ENCODE measurements at regions of chr6 and their contacts with region 1.

Region 1: GRCh38 chr6:156564127-156564806 is 212.9 kb upstream of the ARID1B start:
- DNase-seq: peak; percentile 86
- H3K4me3 ChIP-seq: no peak overlapping the region
- H3K27ac ChIP-seq: no peak overlapping the region
- H3K4me1 ChIP-seq: peaks cover 0 to 10% (median 0%) of the 10 kb centered on the region in 4 donors
- H3K27me3 ChIP-seq: no peaks in the 10 kb centered on the region
- CTCF ChIP-seq: peak; percentile 92 to 96 (median 93)
- EP300 ChIP-seq: no peak
- POLR2A ChIP-seq: no peak

Region 2: DNA sequence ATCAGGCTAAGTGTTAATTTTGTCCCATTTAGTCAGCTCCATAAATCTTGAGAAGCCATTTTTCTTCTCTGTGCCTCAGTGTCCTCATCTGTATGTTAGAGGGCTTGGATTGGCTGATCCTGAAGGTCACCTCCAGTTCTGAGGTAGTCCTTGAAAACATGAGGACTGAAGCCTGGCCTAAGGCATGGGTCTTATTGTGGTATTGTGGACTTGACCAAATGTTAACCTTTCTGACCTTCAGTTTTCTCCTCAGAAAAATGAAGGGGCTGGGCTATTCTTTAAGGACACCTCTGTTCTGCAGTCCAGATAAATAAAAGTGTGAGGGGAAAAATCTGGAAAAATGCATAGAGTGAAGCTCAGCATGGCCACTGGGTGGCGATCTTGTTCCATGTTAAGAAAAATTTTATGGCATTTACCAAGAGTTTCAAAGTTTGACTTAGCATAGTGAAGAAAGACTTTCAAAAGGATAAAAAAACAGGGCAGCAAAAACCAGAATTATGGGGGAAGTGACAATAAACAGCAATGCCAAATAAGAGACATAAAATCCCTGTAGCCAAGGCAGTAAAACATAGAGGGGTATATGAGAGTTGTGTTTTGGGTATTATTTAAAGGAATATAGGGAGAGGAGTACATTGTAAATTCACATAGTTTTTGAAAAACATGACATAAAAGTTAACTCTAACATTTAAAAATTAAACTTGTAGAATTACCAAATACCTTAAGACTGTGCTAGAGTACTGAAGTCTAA is 1236.8 kb before region 1 on chr6:
- in situ Hi-C with region 1: loop called in 1 of 4 experiments (anchors 25 kb)
- intact Hi-C with region 1: no loop called
- DNase-seq: peak; percentile 60
- H3K4me3 ChIP-seq: no peak overlapping the region
- H3K27ac ChIP-seq: no peak overlapping the region
- H3K4me1 ChIP-seq: peaks cover 0 to 3% (median 0%) of the 10 kb centered on the region in 4 donors
- H3K27me3 ChIP-seq: no peaks in the 10 kb centered on the region
- CTCF ChIP-seq: peak; percentile 76 to 88 (median 81)
- EP300 ChIP-seq: no peak
- POLR2A ChIP-seq: no peak

Region 3: DNA sequence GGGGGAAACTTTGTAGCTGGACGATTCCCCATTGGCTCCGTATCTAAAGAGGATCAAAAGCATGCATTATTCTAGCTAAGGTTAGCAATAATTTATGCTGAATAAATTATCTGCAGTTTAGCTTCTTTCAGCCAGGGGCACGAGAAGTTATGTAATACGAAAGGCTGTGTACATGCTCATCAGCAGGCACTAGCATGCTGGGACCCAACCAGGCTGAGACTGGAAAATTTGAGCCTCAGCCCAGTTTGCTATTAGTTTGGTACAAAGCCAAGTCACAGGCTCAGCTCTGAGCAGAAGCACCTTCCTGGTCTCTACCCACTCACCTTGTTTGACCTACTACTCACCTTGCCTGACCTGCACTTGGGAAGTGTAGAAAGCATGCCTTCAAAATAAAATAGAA is 115.1 kb before region 1 on chr6:
- in situ Hi-C with region 1: no loop called
- intact Hi-C with region 1: no loop called
- DNase-seq: no peak
- H3K4me3 ChIP-seq: no peak overlapping the region
- H3K27ac ChIP-seq: no peak overlapping the region
- H3K4me1 ChIP-seq: peaks cover 0 to 5% (median 0%) of the 10 kb centered on the region in 4 donors
- H3K27me3 ChIP-seq: no peaks in the 10 kb centered on the region
- CTCF ChIP-seq: no peak
- EP300 ChIP-seq: no peak
- POLR2A ChIP-seq: no peak

Region 4: GRCh38 chr6:156699017-156699421 is 134.8 kb after region 1 on chr6:
- in situ Hi-C with region 1: no loop called
- intact Hi-C with region 1: loop called (anchors 10 kb)
- DNase-seq: no peak
- H3K4me3 ChIP-seq: no peak overlapping the region
- H3K27ac ChIP-seq: no peak overlapping the region
- H3K4me1 ChIP-seq: peaks cover 0 to 6% (median 2%) of the 10 kb centered on the region in 4 donors
- H3K27me3 ChIP-seq: no peaks in the 10 kb centered on the region
- CTCF ChIP-seq: no peak
- EP300 ChIP-seq: no peak
- POLR2A ChIP-seq: no peak

Region 5: GRCh38 chr6:156752666-156753301 is 188.5 kb after region 1 on chr6:
- in situ Hi-C with region 1: loop called in 2 of 4 experiments (anchors 25 kb)
- intact Hi-C with region 1: no loop called
- DNase-seq: peak; percentile 37
- H3K4me3 ChIP-seq: no peak overlapping the region
- H3K27ac ChIP-seq: no peak overlapping the region
- H3K4me1 ChIP-seq: peaks cover 0 to 7% (median 0%) of the 10 kb centered on the region in 4 donors
- H3K27me3 ChIP-seq: no peaks in the 10 kb centered on the region
- CTCF ChIP-seq: peak; percentile 18 to 53 (median 27)
- EP300 ChIP-seq: no peak
- POLR2A ChIP-seq: no peak

Region 6: DNA sequence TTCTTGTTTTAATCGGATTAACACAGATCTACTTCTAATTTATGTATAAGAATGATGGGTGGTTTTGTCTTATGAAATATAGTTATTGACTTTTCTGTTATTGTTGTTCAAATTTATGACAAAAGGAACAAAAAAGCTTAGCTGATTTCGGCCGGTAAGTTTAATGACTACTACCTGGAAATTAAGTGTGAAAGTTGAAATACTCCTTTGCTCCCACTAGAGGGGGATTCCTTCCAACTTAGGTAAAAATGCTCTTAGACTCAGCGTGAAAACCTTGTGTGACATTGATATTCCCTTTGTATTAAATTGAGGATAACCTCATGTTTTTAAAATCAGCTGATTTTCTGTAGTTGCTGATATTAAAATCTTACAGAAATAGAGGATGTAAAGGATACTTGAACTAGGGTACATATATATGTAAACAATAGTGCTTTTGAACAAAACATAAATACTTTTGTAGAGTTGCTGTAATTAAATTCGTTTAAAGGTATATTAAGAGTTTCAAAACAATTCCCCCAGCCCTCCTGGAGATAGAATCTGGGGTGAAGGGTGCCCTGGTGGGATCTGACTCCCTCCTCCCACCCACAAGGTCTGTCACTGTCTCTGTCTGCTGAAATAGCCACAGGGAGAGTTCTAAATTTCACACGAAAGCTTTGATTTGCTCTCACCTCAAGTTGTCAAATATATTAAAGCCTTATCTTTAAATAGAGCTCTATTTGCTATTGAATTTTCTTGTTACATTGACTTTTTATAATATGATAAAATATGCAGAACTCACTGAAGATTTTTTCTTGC is 470.4 kb after region 1 on chr6:
- in situ Hi-C with region 1: loop called in 1 of 4 experiments (anchors 25 kb)
- intact Hi-C with region 1: no loop called
- DNase-seq: no peak
- H3K4me3 ChIP-seq: no peak overlapping the region
- H3K27ac ChIP-seq: peak overlapping the region in 3 of 4 donors; percentile 65 to 80 (median 74)
- H3K4me1 ChIP-seq: peaks cover 4 to 42% (median 15%) of the 10 kb centered on the region in 4 donors
- H3K27me3 ChIP-seq: no peaks in the 10 kb centered on the region
- CTCF ChIP-seq: peak; percentile 60 to 79 (median 65)
- EP300 ChIP-seq: no peak
- POLR2A ChIP-seq: no peak

Region 7: DNA sequence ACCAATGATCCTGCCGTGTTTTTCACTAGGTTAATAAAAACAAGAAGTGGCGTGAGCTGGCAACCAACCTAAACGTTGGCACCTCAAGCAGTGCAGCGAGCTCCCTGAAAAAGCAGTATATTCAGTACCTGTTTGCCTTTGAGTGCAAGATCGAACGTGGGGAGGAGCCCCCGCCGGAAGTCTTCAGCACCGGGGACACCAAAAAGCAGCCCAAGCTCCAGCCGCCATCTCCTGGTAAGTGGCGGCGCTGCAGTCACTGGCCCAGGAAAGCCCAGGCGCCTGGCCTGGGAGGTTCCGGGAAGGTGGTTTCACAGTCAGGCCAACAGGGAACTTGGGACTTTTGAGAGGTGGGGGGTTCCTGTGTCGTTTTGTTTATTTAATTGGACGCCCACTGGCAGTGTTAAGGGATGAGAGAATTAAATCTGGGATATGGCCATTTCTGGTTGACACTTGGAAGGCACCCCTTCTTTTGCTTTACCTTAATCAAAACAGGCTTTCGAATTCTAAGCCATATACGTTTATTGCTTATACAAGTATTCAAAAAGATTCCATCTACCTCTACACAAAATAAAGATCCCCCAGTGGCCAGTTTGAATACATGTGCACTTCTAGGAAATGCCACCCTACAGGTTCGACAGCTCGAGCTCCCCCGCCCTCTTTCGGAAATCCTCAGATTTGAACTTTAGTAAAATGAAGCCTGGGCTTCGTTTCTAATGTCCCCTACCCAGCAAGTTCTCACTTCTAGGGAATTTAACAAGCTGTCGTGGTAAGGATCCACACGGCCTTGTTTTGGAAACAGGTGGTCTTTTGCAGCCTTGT is 620.1 kb after region 1 on chr6:
- in situ Hi-C with region 1: loop called in 3 of 4 experiments (anchors 10 to 25 kb)
- intact Hi-C with region 1: no loop called
- DNase-seq: peak; percentile 81
- H3K4me3 ChIP-seq: peak overlapping the region in 1 of 4 donors; percentile 26
- H3K27ac ChIP-seq: peak overlapping the region in 3 of 4 donors; percentile 7 to 36 (median 30)
- H3K4me1 ChIP-seq: peaks cover 8 to 38% (median 22%) of the 10 kb centered on the region in 4 donors
- H3K27me3 ChIP-seq: no peaks in the 10 kb centered on the region
- CTCF ChIP-seq: peak; percentile 86 to 94 (median 90)
- EP300 ChIP-seq: no peak
- POLR2A ChIP-seq: no peak